Ascending aorta (tissue), 2 donors: ENCODE measurements at regions of chrX and their contacts with region 1.

Region 1: GRCh38 chrX:153609917-153610428 is 11.0 kb upstream of the CCNQ start:
- DNase-seq: peak in 1 of 2 donors; percentile 83
- H3K4me3 ChIP-seq: peak overlapping the region; percentile 34 to 66
- H3K27ac ChIP-seq: no peak overlapping the region
- H3K4me1 ChIP-seq: no peaks in the 10 kb centered on the region
- H3K27me3 ChIP-seq: no peaks in the 10 kb centered on the region
- CTCF ChIP-seq: peak; percentile 66 to 78 (median 66)

Region 2: DNA sequence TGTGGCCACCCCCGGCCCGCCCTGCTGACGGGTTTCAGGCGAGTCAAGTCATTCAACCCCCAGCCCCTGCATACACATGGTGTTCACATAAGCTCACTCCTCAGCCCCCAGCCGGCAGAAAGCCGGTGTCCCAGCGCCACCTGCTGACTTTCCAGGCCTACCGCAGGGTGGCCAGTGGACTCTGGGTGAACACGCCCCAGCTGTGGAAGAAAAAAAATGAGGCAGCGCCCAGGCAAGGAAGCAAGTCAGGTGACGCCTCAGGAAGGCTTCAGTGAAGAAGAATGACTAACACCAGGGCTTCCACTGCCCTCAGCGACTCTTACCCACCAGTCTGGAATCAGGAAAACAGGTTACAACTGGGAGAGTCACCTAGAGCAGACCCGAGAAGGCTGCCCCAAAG is 98.4 kb after region 1 on chrX:
- intact Hi-C with region 1: loop called (anchors 1 kb)
- DNase-seq: no peak
- H3K4me3 ChIP-seq: no peak overlapping the region
- H3K27ac ChIP-seq: peak overlapping the region in 1 of 2 donors; percentile 18
- H3K4me1 ChIP-seq: no peaks in the 10 kb centered on the region
- H3K27me3 ChIP-seq: no peaks in the 10 kb centered on the region
- CTCF ChIP-seq: peak; percentile 59 to 66 (median 64)

Region 3: GRCh38 chrX:154607370-154607769 is 997.4 kb after region 1 on chrX:
- intact Hi-C with region 1: no loop called
- DNase-seq: peak in 1 of 2 donors; percentile 11
- H3K4me3 ChIP-seq: no peak overlapping the region
- H3K27ac ChIP-seq: no peak overlapping the region
- H3K4me1 ChIP-seq: no peaks in the 10 kb centered on the region
- H3K27me3 ChIP-seq: no peaks in the 10 kb centered on the region
- CTCF ChIP-seq: no peak